Caco-2 (cell line): ENCODE measurements at regions of chr10 and their contacts with region 1.

Region 1: DNA sequence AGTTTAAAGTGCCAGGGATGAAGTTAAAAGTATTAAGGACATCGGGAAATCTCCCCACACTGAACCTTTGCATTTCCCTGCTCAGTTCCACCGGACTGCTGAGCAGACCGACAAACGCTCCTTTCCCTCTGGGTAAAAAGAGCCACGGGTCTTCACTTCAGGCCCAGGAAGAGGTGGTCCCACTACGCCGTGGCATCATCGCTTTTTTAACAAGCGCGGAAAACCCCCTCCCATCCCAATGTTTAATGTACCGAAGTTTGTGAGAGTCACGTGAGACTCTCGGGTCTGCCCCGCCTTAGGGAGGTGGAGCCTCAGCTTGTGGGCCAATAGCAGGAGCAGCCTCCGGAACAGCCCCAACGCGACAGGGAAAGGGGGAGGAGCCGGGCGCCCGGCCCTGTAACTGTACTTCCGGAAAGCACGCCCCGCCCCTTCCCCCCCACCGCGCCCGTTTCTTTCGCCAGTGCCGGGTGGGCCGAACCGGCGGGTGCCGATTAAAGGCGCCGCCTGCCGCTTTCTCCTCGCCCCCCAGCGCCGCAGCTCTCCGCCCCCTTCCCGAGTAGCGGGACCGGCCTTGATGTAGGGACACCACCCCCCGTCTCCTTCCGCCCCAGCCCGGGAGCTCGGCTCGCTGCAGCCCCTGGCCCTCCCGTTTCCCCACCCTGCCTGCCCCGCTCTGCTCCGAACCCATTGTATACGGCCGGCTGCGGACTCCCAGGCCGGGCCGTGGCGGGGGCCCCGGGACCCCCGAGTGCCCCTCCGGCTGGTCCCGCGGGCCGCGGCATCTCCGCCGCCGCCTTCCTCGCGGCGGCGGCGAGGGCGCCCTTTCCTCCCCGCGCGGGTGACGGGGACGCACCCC is 2.2 kb upstream of the TRIM8 start:
- DNase-seq: peak; percentile 97 to 98
- H3K4me3 ChIP-seq: peak overlapping the region; percentile 74
- H3K4me3 Mint-ChIP-seq: peak overlapping the region; percentile 92
- H3K27ac Mint-ChIP-seq: peak overlapping the region; percentile 78
- H3K4me1 ChIP-seq: peaks cover 11% of the 10 kb centered on the region
- H3K4me1 Mint-ChIP-seq: peaks cover 18% of the 10 kb centered on the region
- H3K27me3 ChIP-seq: no peaks in the 10 kb centered on the region
- H3K27me3 Mint-ChIP-seq: no peaks in the 10 kb centered on the region
- CTCF ChIP-seq: no peak

Region 2: GRCh38 chr10:102596506-102596971 is 45.6 kb before region 1 on chr10:
- CTCF ChIA-PET with region 1: no interaction called
- POLR2A ChIA-PET with region 1: no interaction called
- intact Hi-C with region 1: loop called (anchors 1 kb)
- DNase-seq: peak; percentile 69
- H3K4me3 ChIP-seq: no peak overlapping the region
- H3K4me3 Mint-ChIP-seq: no peak overlapping the region
- H3K27ac Mint-ChIP-seq: no peak overlapping the region
- H3K4me1 ChIP-seq: peaks cover 26% of the 10 kb centered on the region
- H3K4me1 Mint-ChIP-seq: peaks cover 9% of the 10 kb centered on the region
- H3K27me3 ChIP-seq: no peaks in the 10 kb centered on the region
- H3K27me3 Mint-ChIP-seq: no peaks in the 10 kb centered on the region
- CTCF ChIP-seq: peak; percentile 91 to 93

Region 3: GRCh38 chr10:102615361-102615760 is 26.7 kb before region 1 on chr10:
- CTCF ChIA-PET with region 1: interaction called, 8 read pairs
- POLR2A ChIA-PET with region 1: no interaction called
- intact Hi-C with region 1: loop called (anchors 1 kb)
- DNase-seq: peak in 1 of 2 experiments; percentile 60
- H3K4me3 ChIP-seq: no peak overlapping the region
- H3K4me3 Mint-ChIP-seq: no peak overlapping the region
- H3K27ac Mint-ChIP-seq: no peak overlapping the region
- H3K4me1 ChIP-seq: no peaks in the 10 kb centered on the region
- H3K4me1 Mint-ChIP-seq: peaks cover 8% of the 10 kb centered on the region
- H3K27me3 ChIP-seq: no peaks in the 10 kb centered on the region
- H3K27me3 Mint-ChIP-seq: no peaks in the 10 kb centered on the region
- CTCF ChIP-seq: peak; percentile 17 to 42

Region 4: DNA sequence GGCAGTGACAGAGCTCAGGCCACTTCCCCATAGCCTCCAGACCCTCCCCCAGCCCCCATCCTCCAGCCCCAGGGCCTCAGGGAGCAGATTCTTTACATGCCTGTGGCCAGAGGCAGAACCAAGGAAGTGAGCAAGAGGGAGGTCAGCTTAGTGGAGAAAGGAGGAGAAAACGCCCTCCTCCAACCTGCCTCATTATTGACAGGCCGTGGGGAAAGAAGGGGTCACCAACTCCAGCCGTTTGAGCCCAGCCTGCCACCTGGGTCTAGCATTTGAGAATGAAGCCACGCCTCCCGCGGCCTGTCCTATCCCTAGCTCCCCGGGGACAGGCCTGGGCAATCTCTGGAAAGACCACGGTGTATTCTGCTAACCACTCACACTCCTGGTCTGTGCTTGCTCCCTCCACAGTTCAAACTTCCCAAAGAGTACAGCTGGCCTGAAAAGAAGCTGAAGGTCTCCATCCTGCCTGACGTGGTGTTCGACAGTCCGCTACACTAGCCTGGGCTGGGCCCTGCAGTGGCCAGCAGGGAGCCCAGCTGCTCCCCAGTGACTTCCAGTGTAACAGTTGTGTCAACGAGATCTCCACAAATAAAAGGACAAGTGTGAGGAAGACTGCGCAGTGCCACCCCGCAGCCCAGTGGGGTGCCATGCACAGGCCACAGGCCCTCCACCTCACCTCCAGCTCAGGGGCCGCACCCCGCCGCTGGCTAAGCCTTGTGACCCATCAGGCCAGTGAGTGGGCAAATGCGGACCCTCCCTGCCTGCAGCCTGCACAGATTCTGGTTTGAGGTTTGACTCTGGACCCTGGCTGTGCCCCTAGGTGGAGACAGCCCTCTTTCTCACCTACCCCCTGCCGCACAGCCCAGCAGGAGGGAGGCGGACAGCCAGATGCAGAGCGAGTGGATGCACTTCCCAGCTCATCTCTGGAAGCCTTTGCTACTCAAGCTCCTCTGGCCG is 12.2 kb before region 1 on chr10:
- CTCF ChIA-PET with region 1: interaction called, 11 read pairs
- POLR2A ChIA-PET with region 1: interaction called, 12 read pairs
- intact Hi-C with region 1: loop called (anchors 1 kb)
- DNase-seq: peak; percentile 86 to 92
- H3K4me3 ChIP-seq: no peak overlapping the region
- H3K4me3 Mint-ChIP-seq: peak overlapping the region; percentile 25
- H3K27ac Mint-ChIP-seq: peak overlapping the region; percentile 88
- H3K4me1 ChIP-seq: peaks cover 44% of the 10 kb centered on the region
- H3K4me1 Mint-ChIP-seq: peaks cover 67% of the 10 kb centered on the region
- H3K27me3 ChIP-seq: no peaks in the 10 kb centered on the region
- H3K27me3 Mint-ChIP-seq: no peaks in the 10 kb centered on the region
- CTCF ChIP-seq: no peak

Region 5: GRCh38 chr10:102678842-102679289 is 36.8 kb after region 1 on chr10:
- CTCF ChIA-PET with region 1: interaction called, 3 read pairs
- POLR2A ChIA-PET with region 1: no interaction called
- intact Hi-C with region 1: loop called (anchors 2 kb)
- DNase-seq: peak; percentile 77 to 81
- H3K4me3 ChIP-seq: no peak overlapping the region
- H3K4me3 Mint-ChIP-seq: peak overlapping the region; percentile 29
- H3K27ac Mint-ChIP-seq: no peak overlapping the region
- H3K4me1 ChIP-seq: no peaks in the 10 kb centered on the region; the same call in 1 of the 2 replicates
- H3K4me1 Mint-ChIP-seq: no peaks in the 10 kb centered on the region
- H3K27me3 ChIP-seq: no peaks in the 10 kb centered on the region
- H3K27me3 Mint-ChIP-seq: no peaks in the 10 kb centered on the region
- CTCF ChIP-seq: peak; percentile 83 to 94

Region 6: GRCh38 chr10:102914781-102915180 is 272.7 kb after region 1 on chr10:
- CTCF ChIA-PET with region 1: no interaction called
- POLR2A ChIA-PET with region 1: no interaction called
- intact Hi-C with region 1: no loop called
- DNase-seq: no peak
- H3K4me3 ChIP-seq: no peak overlapping the region
- H3K4me3 Mint-ChIP-seq: no peak overlapping the region
- H3K27ac Mint-ChIP-seq: no peak overlapping the region
- H3K4me1 ChIP-seq: peaks cover 5% of the 10 kb centered on the region
- H3K4me1 Mint-ChIP-seq: peaks cover 15% of the 10 kb centered on the region
- H3K27me3 ChIP-seq: no peaks in the 10 kb centered on the region
- H3K27me3 Mint-ChIP-seq: no peaks in the 10 kb centered on the region
- CTCF ChIP-seq: no peak

Region 7: DNA sequence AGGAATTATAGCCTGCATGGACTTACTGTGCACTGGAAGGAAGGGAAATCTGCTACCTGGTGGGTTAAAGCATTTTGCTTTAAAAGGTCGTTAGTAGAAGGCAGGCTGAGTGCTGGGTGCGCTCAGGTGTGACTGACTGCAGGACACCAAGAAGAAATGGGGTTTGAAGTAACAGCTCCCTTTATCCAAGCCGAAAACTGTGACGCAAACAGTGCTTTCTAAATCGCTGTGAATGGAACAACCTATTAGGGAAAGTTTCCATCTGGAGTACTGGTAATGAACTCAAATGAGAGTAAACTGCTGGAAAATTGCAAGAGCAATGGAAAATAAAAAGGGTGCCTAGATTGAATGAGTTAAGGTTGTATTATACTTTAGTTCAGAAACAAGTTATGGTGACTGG is 371.3 kb after region 1 on chr10:
- CTCF ChIA-PET with region 1: no interaction called
- POLR2A ChIA-PET with region 1: no interaction called
- intact Hi-C with region 1: no loop called
- DNase-seq: no peak
- H3K4me3 ChIP-seq: no peak overlapping the region
- H3K4me3 Mint-ChIP-seq: no peak overlapping the region
- H3K27ac Mint-ChIP-seq: no peak overlapping the region
- H3K4me1 ChIP-seq: no peaks in the 10 kb centered on the region
- H3K4me1 Mint-ChIP-seq: no peaks in the 10 kb centered on the region
- H3K27me3 ChIP-seq: no peaks in the 10 kb centered on the region
- H3K27me3 Mint-ChIP-seq: no peaks in the 10 kb centered on the region
- CTCF ChIP-seq: no peak